Psoas muscle (tissue), 8 donors: ENCODE measurements at regions of chr17 and their contacts with region 1.

Region 1: DNA sequence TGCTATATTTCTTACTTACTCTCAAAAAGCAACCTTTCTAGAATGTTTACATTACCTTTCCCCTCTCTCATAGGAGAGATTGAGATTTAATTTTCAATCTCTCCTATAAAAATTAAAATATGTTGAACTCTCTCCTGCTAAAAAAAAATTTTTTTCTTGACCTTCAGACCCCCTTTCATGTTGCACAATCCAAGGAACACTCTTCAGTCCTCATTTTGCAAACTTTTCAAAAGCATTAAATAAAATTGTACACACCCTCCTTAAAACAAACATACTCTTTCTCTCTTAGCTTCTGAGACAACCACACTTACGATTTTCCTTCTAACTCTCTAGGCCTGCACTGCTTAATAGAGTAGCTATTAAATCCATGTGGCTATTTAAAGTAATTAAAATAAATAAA is 8.6 kb upstream of the ABCA6 start:
- DNase-seq: no peak
- ATAC-seq: no peak
- H3K4me3 ChIP-seq: no peak overlapping the region
- H3K27ac ChIP-seq: no peak overlapping the region
- H3K4me1 ChIP-seq: no peaks in the 10 kb centered on the region
- H3K27me3 ChIP-seq: no peaks in the 10 kb centered on the region
- CTCF ChIP-seq: no peak

Region 2: GRCh38 chr17:69213059-69213813 is 62.9 kb after region 1 on chr17:
- intact Hi-C with region 1: loop called in 1 of 2 experiments (anchors 10 kb)
- DNase-seq: no peak
- ATAC-seq: no peak
- H3K4me3 ChIP-seq: no peak overlapping the region
- H3K27ac ChIP-seq: no peak overlapping the region
- H3K4me1 ChIP-seq: no peaks in the 10 kb centered on the region
- H3K27me3 ChIP-seq: no peaks in the 10 kb centered on the region
- CTCF ChIP-seq: no peak

Region 3: GRCh38 chr17:69287168-69287567 is 136.8 kb after region 1 on chr17:
- intact Hi-C with region 1: loop called in 1 of 2 experiments (anchors 10 kb)
- DNase-seq: no peak
- ATAC-seq: peak in 1 of 4 donors; percentile 59
- H3K4me3 ChIP-seq: no peak overlapping the region
- H3K27ac ChIP-seq: no peak overlapping the region
- H3K4me1 ChIP-seq: no peaks in the 10 kb centered on the region
- H3K27me3 ChIP-seq: no peaks in the 10 kb centered on the region
- CTCF ChIP-seq: no peak